ENCODE measurements at regions of chr22 and their contacts with region 1.

Region 1: GRCh38 chr22:46006379-46007002 is 29.5 kb upstream of the WNT7B start:
- DNase-seq: peak; percentile 90
- H3K4me3 Mint-ChIP-seq: no peak overlapping the region
- H3K27ac Mint-ChIP-seq: no peak overlapping the region
- H3K4me1 Mint-ChIP-seq: peaks cover 6% of the 10 kb centered on the region
- H3K27me3 Mint-ChIP-seq: no peaks in the 10 kb centered on the region

Region 2: GRCh38 chr22:45696227-45696626 is 310.3 kb before region 1 on chr22:
- CTCF ChIA-PET with region 1: no interaction called
- POLR2A ChIA-PET with region 1: no interaction called
- intact Hi-C with region 1: no loop called
- DNase-seq: no peak
- H3K4me3 Mint-ChIP-seq: no peak overlapping the region
- H3K27ac Mint-ChIP-seq: no peak overlapping the region
- H3K4me1 Mint-ChIP-seq: peaks cover 5% of the 10 kb centered on the region
- H3K27me3 Mint-ChIP-seq: no peaks in the 10 kb centered on the region

Region 3: GRCh38 chr22:45960477-45961386 is 45.8 kb before region 1 on chr22:
- CTCF ChIA-PET with region 1: no interaction called
- POLR2A ChIA-PET with region 1: no interaction called
- intact Hi-C with region 1: no loop called
- DNase-seq: no peak
- H3K4me3 Mint-ChIP-seq: no peak overlapping the region
- H3K27ac Mint-ChIP-seq: no peak overlapping the region
- H3K4me1 Mint-ChIP-seq: no peaks in the 10 kb centered on the region
- H3K27me3 Mint-ChIP-seq: peaks cover 7% of the 10 kb centered on the region

Region 4: DNA sequence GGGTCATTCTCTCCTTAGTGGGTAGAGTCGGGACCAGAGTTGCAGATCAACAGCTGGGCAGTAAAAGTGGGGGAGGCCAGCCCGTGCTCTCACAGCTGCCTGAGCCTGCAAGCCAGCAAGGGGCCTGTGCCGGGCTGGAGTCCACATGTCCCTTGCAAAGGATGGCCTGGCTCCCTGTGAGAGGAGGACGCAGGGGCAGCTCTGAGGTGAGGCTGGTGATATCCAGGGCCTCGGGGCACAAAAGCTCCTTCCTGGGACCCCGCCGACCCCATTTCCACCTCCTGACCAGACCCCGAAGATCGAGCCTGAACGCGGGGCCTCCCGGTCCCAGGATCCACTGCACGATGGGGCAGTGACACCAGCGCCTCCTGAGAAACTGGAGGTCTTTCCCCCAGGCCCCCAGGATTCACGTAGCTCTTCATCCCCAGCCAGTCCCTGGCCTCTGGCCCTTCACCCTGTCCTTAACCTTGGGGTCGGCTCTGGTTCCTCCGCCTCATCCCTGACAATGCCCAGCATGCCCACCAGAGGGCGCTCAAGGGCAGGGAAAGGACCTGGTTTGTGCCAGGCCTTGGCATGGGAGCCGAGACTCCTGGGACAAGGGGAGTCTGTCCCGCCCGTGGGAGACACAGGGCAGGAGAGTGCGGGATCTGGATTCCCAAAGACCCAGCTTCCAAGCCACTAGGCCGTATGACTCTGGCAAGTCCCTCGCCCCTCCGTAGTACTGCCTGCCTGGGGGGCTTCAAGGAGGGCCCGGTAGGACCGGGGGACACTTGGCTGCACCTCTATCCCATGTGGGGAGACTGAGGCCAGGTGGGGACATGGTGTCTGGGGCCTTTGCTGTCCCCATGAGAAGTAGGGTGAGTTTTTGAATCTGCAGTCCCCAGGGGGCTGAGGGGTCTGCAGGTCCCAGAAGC is 11.7 kb before region 1 on chr22:
- CTCF ChIA-PET with region 1: interaction called, 69 read pairs
- POLR2A ChIA-PET with region 1: no interaction called
- intact Hi-C with region 1: no loop called
- DNase-seq: peak; percentile 85
- H3K4me3 Mint-ChIP-seq: no peak overlapping the region
- H3K27ac Mint-ChIP-seq: no peak overlapping the region
- H3K4me1 Mint-ChIP-seq: no peaks in the 10 kb centered on the region
- H3K27me3 Mint-ChIP-seq: peaks cover 2% of the 10 kb centered on the region

Region 5: GRCh38 chr22:46035742-46036557 is 29.5 kb after region 1 on chr22:
- CTCF ChIA-PET with region 1: interaction called, 76 read pairs
- POLR2A ChIA-PET with region 1: interaction called, 4 read pairs
- intact Hi-C with region 1: no loop called
- DNase-seq: peak; percentile 100
- H3K4me3 Mint-ChIP-seq: peak overlapping the region; percentile 83
- H3K27ac Mint-ChIP-seq: peak overlapping the region; percentile 86
- H3K4me1 Mint-ChIP-seq: peaks cover 12% of the 10 kb centered on the region
- H3K27me3 Mint-ChIP-seq: no peaks in the 10 kb centered on the region

Region 6: GRCh38 chr22:46071451-46072109 is 65.1 kb after region 1 on chr22:
- CTCF ChIA-PET with region 1: interaction called, 29 read pairs
- POLR2A ChIA-PET with region 1: interaction called, 8 read pairs
- intact Hi-C with region 1: no loop called
- DNase-seq: peak; percentile 71
- H3K4me3 Mint-ChIP-seq: peak overlapping the region; percentile 77
- H3K27ac Mint-ChIP-seq: peak overlapping the region; percentile 83
- H3K4me1 Mint-ChIP-seq: peaks cover 37% of the 10 kb centered on the region
- H3K27me3 Mint-ChIP-seq: peaks cover 2% of the 10 kb centered on the region

Region 7: DNA sequence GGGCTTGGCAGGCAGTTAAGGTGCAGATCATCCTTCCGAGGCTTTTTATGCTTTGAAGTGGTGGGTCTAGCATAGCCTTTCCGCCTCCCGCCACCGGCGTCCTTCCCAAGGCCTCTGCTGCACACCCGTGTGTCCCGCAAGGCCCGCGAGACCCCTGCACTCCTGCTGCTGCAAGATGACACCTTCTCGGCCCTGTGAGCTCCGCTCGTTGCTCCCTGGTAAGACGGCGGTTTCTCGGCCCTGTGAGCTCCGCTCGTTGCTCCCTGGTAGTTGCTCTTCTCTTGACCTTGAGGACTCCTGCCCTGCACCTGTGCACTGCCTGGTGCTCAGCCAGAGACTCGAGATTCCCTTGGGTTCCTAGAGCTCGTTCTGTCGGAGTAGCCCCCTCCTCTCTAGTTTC is 311.2 kb after region 1 on chr22:
- CTCF ChIA-PET with region 1: interaction called, 15 read pairs
- POLR2A ChIA-PET with region 1: no interaction called
- intact Hi-C with region 1: loop called (anchors 5 kb)
- DNase-seq: no peak
- H3K4me3 Mint-ChIP-seq: no peak overlapping the region
- H3K27ac Mint-ChIP-seq: no peak overlapping the region
- H3K4me1 Mint-ChIP-seq: no peaks in the 10 kb centered on the region
- H3K27me3 Mint-ChIP-seq: no peaks in the 10 kb centered on the region

Measured in activated CD4-positive, alpha-beta memory T cell treated with anti-CD3 and anti-CD28 coated beads for 36 hours (primary cell).